ENCODE measurements at regions of chr9 and their contacts with region 1.

Region 1: GRCh38 chr9:131590908-131591844 is 45.9 kb downstream of the PRRT1B start:
- DNase-seq: peak; percentile 69 to 78 (median 77)
- H3K4me3 ChIP-seq: peak overlapping the region in 4 of 7 experiments; percentile 6 to 50 (median 19)
- H3K27ac ChIP-seq: no peak overlapping the region
- H3K4me1 ChIP-seq: peaks cover 3 to 24% (median 18%) of the 10 kb centered on the region in 4 experiments
- H3K27me3 ChIP-seq: no peaks in the 10 kb centered on the region

Region 2: DNA sequence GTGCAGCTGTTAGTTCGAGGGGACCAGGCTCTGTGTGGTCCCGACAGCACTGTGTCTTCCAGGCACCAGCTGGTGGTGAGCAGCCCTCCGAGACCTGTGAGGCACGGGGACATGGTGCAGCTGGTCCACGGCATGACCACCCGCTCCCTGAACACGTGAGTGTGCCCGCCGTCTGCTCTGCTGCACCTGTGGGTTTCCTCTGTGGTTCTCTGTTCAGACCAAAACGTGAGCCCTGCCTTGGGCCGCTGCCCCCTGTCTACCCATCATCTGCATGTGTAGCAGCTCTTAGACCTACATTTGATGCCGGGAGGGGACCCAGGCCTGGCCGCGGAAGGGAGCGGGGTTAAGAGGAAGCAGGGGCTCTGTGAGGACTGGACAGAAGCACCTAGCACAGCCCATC is 78.0 kb before region 1 on chr9:
- CTCF ChIA-PET with region 1: no interaction called
- POLR2A ChIA-PET with region 1: no interaction called
- DNase-seq: no peak
- H3K4me3 ChIP-seq: no peak overlapping the region
- H3K27ac ChIP-seq: no peak overlapping the region
- H3K4me1 ChIP-seq: no peaks in the 10 kb centered on the region
- H3K27me3 ChIP-seq: no peaks in the 10 kb centered on the region

Region 3: DNA sequence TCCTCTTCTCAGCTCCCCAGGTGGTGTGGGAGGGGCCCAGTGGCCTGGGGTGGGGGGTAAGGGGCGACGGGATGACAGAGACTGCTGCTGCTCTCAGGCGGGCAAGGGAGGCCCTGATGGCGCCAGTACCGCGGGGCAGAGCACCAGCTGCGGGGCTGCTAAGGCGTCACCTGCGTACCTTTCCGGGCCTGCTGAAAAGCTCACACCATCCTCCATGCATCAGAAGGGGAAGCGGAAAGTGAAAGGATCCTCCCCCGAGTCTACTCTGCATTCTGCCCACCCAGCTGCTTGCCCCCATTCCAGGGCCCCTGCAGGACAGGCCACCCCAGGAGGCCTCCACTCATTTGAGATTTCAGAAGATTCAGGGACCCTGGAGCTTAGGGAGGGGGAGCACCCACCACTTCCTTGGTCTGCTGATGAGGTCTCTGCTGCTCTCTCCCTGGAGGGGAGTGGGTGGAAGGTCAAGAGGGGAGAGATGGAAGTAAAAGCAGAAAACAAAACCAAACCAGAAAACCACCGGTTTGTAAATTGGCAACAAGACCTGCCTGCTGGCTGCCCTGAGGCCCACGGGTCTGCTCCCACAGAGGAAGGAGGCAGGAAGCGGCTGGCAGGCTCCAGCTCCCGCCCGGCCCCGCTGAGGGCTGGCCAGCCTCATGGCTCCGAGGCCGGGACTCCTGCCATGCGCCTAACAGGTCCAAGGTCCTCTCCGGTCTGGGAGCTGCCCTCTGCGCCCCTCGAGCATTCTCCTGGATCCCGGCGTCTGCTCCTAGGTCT is 12.3 kb before region 1 on chr9:
- CTCF ChIA-PET with region 1: interaction called, 10 read pairs
- POLR2A ChIA-PET with region 1: no interaction called
- DNase-seq: peak; percentile 51 to 89 (median 83)
- H3K4me3 ChIP-seq: peak overlapping the region in 4 of 7 experiments; percentile 12 to 62 (median 37)
- H3K27ac ChIP-seq: peak overlapping the region; percentile 25 to 66
- H3K4me1 ChIP-seq: peaks cover 0 to 55% (median 47%) of the 10 kb centered on the region in 4 experiments
- H3K27me3 ChIP-seq: no peaks in the 10 kb centered on the region

Region 4: GRCh38 chr9:131608493-131609037 is 17.4 kb after region 1 on chr9:
- CTCF ChIA-PET with region 1: interaction called, 24 read pairs
- POLR2A ChIA-PET with region 1: interaction called, 3 read pairs
- DNase-seq: no peak
- H3K4me3 ChIP-seq: no peak overlapping the region
- H3K27ac ChIP-seq: no peak overlapping the region
- H3K4me1 ChIP-seq: peaks cover 3 to 21% (median 12%) of the 10 kb centered on the region in 4 experiments
- H3K27me3 ChIP-seq: no peaks in the 10 kb centered on the region

Region 5: GRCh38 chr9:131733541-131734061 is 142.4 kb after region 1 on chr9:
- CTCF ChIA-PET with region 1: interaction called, 39 read pairs
- POLR2A ChIA-PET with region 1: no interaction called
- DNase-seq: peak; percentile 94 to 99 (median 99)
- H3K4me3 ChIP-seq: peak overlapping the region in 5 of 7 experiments; percentile 37 to 68 (median 56)
- H3K27ac ChIP-seq: peak overlapping the region; percentile 75 to 82
- H3K4me1 ChIP-seq: peaks cover 51 to 91% (median 87%) of the 10 kb centered on the region in 4 experiments
- H3K27me3 ChIP-seq: no peaks in the 10 kb centered on the region

Region 6: DNA sequence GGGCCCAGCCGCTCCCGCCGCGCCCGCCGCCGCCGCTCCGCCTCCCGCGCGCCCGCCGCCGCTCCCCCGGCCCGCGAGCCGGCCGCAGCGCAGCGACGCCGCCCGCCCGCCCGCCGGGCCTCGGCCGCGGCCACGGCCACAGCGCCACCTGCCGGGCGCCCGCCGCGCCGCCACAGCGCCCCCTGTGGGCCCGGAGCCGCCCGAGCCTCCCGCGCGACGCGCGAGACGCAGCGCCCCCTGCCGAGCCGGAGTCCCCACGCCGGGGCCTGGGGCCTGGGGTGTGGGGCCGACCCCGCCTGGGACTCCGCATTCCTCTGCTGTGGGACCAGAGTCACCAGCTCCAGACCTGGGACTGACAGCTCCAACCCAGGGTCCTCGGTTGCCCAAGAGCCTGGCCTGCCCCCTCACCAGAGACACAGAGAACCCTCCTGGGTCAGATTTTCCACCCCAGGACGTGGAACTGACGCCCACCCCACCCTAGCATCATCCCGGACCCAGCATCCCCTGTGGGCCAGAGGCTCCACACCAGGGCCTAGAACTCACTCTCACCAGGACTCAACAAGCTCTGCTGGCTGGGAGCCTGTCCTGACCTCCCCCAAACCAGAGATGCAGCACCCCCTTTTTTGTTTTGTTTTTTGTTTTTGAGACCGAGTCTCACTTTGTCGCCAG is 148.9 kb after region 1 on chr9 and contains the start of gene RAPGEF1:
- CTCF ChIA-PET with region 1: interaction called, 148 read pairs
- POLR2A ChIA-PET with region 1: no interaction called
- DNase-seq: peak; percentile 43 to 69 (median 62)
- H3K4me3 ChIP-seq: peak within 1 kb of the TSS; percentile 27 to 78 (median 71)
- H3K27ac ChIP-seq: peak within 1 kb of the TSS in 1 of 2 experiments; percentile 25
- H3K4me1 ChIP-seq: peaks cover 14 to 57% (median 49%) of the 10 kb centered on the region in 4 experiments
- H3K27me3 ChIP-seq: no peaks in the 10 kb centered on the region